G401 (cell line): ENCODE measurements at regions of chr3 and their contacts with region 1.

Region 1: DNA sequence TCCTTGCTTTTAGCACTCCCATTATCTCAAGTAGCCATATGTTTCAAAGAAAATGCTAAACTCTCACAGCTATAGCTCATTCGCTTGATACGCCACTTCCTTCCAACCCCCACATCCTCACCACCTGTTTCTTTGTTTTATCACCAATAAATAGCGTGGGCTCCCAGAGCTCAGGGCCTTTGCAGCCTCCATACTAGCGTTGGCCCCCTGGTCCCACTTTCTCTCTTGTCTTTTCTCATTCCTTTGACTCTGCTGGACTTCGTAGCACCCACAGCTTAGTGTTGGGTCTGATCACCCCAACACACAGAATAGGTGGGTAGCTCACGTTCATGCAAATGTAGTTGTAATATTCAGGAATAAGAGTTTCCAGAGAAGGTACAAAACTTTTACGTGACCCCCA is 4.1 kb upstream of the GPD1L start:
- DNase-seq: no peak

Region 2: GRCh38 chr3:31908391-31909097 is 193.7 kb before region 1 on chr3:
- in situ Hi-C with region 1: no loop called
- DNase-seq: no peak

Region 3: DNA sequence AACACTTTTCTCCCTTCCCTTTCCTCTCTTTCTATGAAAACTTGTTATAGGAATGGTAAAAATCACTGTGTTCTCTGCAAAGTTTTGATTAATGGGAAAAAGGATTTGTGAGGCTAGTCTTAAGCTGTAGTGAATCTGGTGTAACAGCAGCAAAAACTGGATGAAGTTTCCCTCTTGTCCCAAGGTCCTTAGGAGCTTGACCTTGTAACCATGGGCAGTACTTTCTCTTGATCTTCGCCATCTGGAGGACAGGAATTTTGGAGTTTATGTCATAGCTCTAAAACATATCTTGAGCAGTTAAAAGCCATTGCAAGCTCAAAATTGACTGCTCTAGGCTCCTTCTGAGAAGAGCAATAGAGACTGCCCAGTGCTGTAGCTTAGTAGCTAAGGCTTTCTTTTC is 52.4 kb before region 1 on chr3:
- in situ Hi-C with region 1: loop called (anchors 5 kb)
- DNase-seq: no peak